PC-9 (cell line): ENCODE measurements at regions of chr11 and their contacts with region 1.

Region 1: GRCh38 chr11:29328961-29329441 is 687.8 kb downstream of the KCNA4 start:
- DNase-seq: peak in 1 of 2 experiments; percentile 40
- H3K4me3 ChIP-seq: no peak overlapping the region
- H3K27ac ChIP-seq: no peak overlapping the region
- H3K4me1 ChIP-seq: no peaks in the 10 kb centered on the region
- H3K27me3 ChIP-seq: no peaks in the 10 kb centered on the region
- CTCF ChIP-seq: peak; percentile 73

Region 2: GRCh38 chr11:29173660-29174062 is 155.3 kb before region 1 on chr11:
- CTCF ChIA-PET with region 1: no interaction called
- POLR2A ChIA-PET with region 1: no interaction called
- intact Hi-C with region 1: loop called (anchors 5 kb)
- DNase-seq: peak in 1 of 2 experiments; percentile 45
- H3K4me3 ChIP-seq: no peak overlapping the region
- H3K27ac ChIP-seq: no peak overlapping the region
- H3K4me1 ChIP-seq: no peaks in the 10 kb centered on the region
- H3K27me3 ChIP-seq: no peaks in the 10 kb centered on the region
- CTCF ChIP-seq: no peak

Region 3: GRCh38 chr11:29260939-29261705 is 67.9 kb before region 1 on chr11:
- CTCF ChIA-PET with region 1: interaction called, 7 read pairs
- POLR2A ChIA-PET with region 1: no interaction called
- intact Hi-C with region 1: loop called (anchors 2 kb)
- DNase-seq: peak; percentile 65 to 80
- H3K4me3 ChIP-seq: no peak overlapping the region
- H3K27ac ChIP-seq: no peak overlapping the region
- H3K4me1 ChIP-seq: peaks cover 10% of the 10 kb centered on the region
- H3K27me3 ChIP-seq: no peaks in the 10 kb centered on the region
- CTCF ChIP-seq: no peak; the same call in 1 of the 2 replicates

Region 4: DNA sequence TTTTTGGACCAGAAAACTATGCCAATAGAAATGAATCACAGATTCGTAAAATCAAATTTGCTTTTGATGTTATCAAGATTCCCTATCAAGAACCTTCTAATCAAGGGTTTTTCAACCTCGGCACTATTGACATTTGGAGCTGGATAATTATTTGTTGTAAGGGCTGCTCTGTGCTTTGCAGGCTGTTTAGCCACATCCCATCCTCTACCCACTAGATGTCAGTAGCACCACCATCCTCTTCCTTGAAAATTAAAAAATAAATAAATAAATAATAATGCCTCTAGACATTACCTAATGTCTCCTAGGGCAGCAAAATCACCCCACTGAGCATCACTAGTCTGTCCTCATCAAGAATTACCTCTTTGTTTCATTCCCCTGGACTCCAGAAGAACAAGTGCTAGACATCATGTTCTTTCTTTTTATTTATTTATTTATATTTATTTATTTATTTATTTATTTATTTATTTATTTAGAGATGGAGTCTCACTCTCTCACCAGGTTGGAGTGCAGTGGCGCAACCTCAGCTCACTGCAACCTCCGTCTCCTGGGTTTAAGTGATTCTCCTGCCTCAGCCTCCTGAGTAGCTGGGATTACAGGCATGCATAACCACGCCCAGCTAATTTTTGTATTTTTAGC is 56.9 kb before region 1 on chr11:
- CTCF ChIA-PET with region 1: no interaction called
- POLR2A ChIA-PET with region 1: no interaction called
- intact Hi-C with region 1: loop called (anchors 2 kb)
- DNase-seq: no peak
- H3K4me3 ChIP-seq: no peak overlapping the region
- H3K27ac ChIP-seq: no peak overlapping the region
- H3K4me1 ChIP-seq: no peaks in the 10 kb centered on the region
- H3K27me3 ChIP-seq: no peaks in the 10 kb centered on the region
- CTCF ChIP-seq: peak; percentile 51